ENCODE measurements at regions of chr2 and their contacts with region 1.

Region 1: DNA sequence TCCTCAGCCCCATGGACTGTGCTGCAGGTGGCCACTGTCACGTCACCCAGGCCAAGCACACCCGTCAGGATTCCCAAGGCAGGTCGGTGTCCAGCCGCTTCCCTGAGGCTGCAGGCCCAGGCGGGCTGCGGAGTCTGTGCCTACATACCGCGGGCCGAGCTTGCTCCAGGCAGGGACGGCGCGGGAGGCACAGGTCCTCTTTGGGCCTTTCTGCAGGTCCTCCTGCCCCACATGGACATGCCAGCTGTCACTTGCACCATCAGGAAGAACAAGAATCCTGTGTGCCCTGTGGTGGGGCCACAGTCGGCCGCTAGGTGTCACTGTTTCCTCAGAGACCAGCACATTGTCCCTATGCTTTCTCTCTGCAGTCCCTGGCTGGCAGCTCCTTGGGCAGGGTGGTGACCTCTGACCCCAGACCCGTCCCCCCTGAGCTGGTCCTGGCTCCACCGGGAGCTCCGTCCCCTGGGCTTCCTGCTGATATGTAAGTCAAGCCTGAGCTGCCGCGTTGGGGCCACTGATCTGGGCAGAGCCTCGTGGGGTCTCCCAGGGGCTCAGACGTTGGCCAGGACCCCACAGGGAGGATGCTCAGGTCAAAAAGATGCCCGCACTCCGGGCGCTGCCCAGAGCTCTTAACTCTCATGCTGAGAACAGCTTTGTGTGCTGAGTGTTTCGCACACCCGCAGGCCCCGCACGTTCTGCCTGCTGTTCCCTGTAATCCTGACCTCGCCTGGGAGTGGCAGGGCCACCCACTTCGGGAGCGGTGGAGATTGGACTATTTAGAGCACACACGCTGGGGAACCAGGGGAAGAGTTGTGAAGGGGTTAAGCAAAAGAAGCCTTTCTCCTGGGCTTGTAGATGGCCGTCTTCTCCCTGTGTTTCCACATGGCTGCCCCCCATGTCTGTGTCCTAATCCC is 17.3 kb upstream of the AGXT start:
- DNase-seq: peak; percentile 92
- H3K4me3 Mint-ChIP-seq: no peak overlapping the region
- H3K27ac Mint-ChIP-seq: no peak overlapping the region
- H3K4me1 Mint-ChIP-seq: peaks cover 7% of the 10 kb centered on the region
- H3K27me3 Mint-ChIP-seq: peaks cover 37% of the 10 kb centered on the region
- CTCF ChIP-seq: peak; percentile 98

Region 2: GRCh38 chr2:240714747-240715725 is 136.3 kb before region 1 on chr2:
- CTCF ChIA-PET with region 1: no interaction called
- intact Hi-C with region 1: no loop called
- DNase-seq: no peak
- H3K4me3 Mint-ChIP-seq: no peak overlapping the region
- H3K27ac Mint-ChIP-seq: peak overlapping the region; percentile 44
- H3K4me1 Mint-ChIP-seq: no peaks in the 10 kb centered on the region
- H3K27me3 Mint-ChIP-seq: peaks cover 13% of the 10 kb centered on the region
- CTCF ChIP-seq: no peak

Region 3: DNA sequence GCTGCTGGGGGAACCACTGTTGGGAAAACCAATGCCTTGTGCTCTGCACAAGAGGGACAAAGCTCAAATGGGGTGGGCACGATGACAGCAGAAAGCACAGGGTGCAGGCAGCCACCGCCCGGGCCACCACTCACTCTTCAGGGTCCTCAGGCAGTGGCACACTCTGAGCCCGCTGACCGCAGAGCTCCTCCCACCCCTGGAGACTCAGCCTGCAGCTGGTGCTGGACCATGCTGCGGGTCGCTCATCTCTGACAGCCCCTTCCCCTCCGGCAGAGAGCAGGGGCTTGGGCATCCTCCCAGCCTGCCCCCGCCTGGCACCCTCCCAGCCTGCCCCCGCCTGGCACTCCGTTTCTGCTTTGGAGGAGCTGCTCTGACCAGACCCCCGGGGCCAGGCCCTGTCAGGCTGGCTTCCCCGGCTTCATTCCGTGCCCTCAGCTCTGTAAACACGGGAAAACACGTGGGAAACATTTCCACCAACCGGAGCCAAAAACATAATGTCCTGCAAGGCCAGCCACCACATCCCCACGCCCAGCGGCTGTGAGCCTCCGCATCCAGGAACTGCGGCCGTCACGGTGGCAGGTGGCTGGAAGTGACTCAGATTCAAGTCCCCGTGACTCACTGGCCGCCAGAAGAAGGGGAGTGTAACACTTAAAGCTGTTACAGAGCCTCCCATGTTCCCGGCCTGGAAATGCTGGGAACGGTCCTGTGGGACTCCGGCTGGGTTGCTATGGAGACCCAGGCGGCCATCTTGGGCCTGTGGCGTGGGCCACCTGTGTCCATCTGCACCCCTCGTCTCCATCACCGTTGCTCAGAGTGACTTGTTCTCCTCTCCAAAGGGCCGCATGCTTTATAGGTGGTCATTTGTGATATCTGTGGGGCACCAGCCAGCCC is 140.3 kb after region 1 on chr2:
- CTCF ChIA-PET with region 1: no interaction called
- intact Hi-C with region 1: loop called (anchors 2 kb)
- DNase-seq: peak; percentile 90
- H3K4me3 Mint-ChIP-seq: no peak overlapping the region
- H3K27ac Mint-ChIP-seq: peak overlapping the region; percentile 68
- H3K4me1 Mint-ChIP-seq: peaks cover 11% of the 10 kb centered on the region
- H3K27me3 Mint-ChIP-seq: no peaks in the 10 kb centered on the region
- CTCF ChIP-seq: no peak

Region 4: GRCh38 chr2:241063587-241063986 is 212.3 kb after region 1 on chr2:
- CTCF ChIA-PET with region 1: no interaction called
- intact Hi-C with region 1: loop called (anchors 1 kb)
- DNase-seq: peak; percentile 23
- H3K4me3 Mint-ChIP-seq: peak overlapping the region; percentile 68
- H3K27ac Mint-ChIP-seq: no peak overlapping the region
- H3K4me1 Mint-ChIP-seq: no peaks in the 10 kb centered on the region
- H3K27me3 Mint-ChIP-seq: peaks cover 13% of the 10 kb centered on the region
- CTCF ChIP-seq: no peak

Measured in Calu3 (cell line).